AG04449 (cell line): ENCODE measurements at regions of chr17 and their contacts with region 1.

Region 1: GRCh38 chr17:4565209-4566141 is 5.1 kb upstream of the GGT6 start:
- DNase-seq: peak; percentile 36
- H3K4me3 ChIP-seq: no peak overlapping the region
- CTCF ChIP-seq: peak; percentile 84

Region 2: GRCh38 chr17:4420692-4421131 is 144.8 kb before region 1 on chr17:
- CTCF ChIA-PET with region 1: interaction called, 20 read pairs
- POLR2A ChIA-PET with region 1: no interaction called
- DNase-seq: peak; percentile 12
- H3K4me3 ChIP-seq: no peak overlapping the region; the same call in 1 of the 2 replicates
- CTCF ChIP-seq: peak; percentile 80

Region 3: GRCh38 chr17:4480929-4481898 is 84.3 kb before region 1 on chr17:
- CTCF ChIA-PET with region 1: no interaction called
- POLR2A ChIA-PET with region 1: no interaction called
- DNase-seq: no peak
- H3K4me3 ChIP-seq: no peak overlapping the region
- CTCF ChIP-seq: no peak

Region 4: DNA sequence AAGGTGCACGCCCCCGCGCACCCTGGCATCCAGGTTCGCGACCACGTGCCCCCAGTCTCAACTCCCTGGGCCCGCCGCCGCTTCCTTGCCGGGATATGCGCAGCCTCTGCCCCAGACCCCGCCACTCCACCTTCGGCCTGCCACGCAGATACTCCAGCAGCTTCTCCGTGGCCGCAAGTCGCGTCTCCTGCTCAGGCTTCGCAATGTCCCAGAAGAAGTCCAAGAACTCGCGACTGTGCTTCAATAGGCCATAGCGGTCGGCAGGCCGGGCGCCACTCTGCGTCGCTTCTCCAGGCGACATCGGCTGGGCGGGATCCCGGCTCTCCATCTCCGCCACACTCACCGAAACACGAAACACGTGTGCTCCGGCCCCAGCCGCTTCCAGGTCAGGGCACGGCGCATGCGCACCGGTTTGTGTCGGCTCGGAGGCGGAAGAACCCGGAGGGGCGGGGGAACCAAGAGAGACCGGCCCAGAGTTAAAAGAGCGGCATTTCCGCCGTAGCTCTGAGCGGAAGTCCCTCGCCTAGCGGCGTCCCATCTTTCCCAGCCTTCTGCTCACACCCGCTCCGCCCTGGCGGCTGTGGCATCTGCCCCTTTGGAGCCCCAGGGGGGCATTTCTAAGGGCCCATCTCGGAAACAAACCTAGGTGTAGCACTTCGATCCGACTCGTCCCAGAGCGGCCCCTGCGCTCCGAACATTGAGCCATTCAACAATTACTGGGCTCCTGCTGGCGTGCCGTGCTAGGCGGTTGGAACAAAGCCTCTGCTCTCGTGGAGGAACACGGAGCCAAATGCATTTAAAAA is 10.3 kb before region 1 on chr17 and contains the start of gene MYBBP1A:
- CTCF ChIA-PET with region 1: interaction called, 137 read pairs
- POLR2A ChIA-PET with region 1: no interaction called
- DNase-seq: peak; percentile 42
- H3K4me3 ChIP-seq: peak within 1 kb of the TSS; percentile 99
- CTCF ChIP-seq: peak; percentile 12

Region 5: DNA sequence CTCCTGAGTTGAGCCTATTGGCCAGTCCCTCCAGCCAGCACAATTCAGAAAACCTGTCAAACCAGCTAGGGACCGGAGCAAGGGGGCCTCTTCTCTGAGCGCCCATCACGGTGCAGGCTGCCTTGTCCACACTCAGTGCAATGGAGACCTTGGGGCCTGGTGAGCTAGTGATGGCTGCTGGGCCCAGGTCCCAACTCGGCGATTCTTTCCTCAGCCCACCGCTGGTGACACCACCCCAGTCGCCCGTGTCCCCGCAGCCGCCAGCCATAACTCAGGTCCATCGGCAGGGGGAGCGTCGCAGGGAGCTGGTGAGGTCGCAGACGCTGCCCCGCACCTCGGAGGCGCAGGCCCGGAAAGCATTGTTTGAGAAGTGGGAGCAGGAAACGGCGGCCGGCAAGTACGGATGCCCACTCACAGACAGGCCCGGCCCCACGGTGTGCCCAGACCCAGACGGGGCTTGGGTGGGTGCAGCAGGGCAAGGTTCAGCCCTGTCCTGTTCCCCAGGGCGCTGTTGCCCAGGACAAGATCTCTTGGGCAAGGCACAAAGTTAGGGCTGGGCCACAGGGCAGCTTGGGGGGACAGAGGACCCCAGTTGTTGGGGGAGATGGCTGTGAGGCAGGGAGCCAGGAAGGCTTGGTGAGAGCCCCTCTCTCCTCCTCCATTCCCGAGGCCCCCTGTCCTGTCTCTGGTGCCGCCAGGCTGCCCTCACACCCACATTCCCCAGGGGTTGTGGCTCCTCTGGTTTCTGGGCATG is 29.6 kb after region 1 on chr17:
- CTCF ChIA-PET with region 1: interaction called, 20 read pairs
- POLR2A ChIA-PET with region 1: no interaction called
- DNase-seq: no peak
- H3K4me3 ChIP-seq: no peak overlapping the region
- CTCF ChIP-seq: peak; percentile 39

Region 6: GRCh38 chr17:4616476-4616875 is 51.0 kb after region 1 on chr17:
- CTCF ChIA-PET with region 1: interaction called, 268 read pairs
- POLR2A ChIA-PET with region 1: no interaction called
- DNase-seq: no peak
- H3K4me3 ChIP-seq: no peak overlapping the region
- CTCF ChIP-seq: no peak

Region 7: GRCh38 chr17:4635823-4636375 is 70.4 kb after region 1 on chr17:
- CTCF ChIA-PET with region 1: interaction called, 69 read pairs
- POLR2A ChIA-PET with region 1: no interaction called
- DNase-seq: no peak
- H3K4me3 ChIP-seq: no peak overlapping the region
- CTCF ChIP-seq: no peak

Region 8: GRCh38 chr17:4891411-4892342 is 326.2 kb after region 1 on chr17:
- CTCF ChIA-PET with region 1: interaction called, 11 read pairs
- POLR2A ChIA-PET with region 1: no interaction called
- DNase-seq: no peak
- H3K4me3 ChIP-seq: no peak overlapping the region
- CTCF ChIP-seq: no peak

Region 9: DNA sequence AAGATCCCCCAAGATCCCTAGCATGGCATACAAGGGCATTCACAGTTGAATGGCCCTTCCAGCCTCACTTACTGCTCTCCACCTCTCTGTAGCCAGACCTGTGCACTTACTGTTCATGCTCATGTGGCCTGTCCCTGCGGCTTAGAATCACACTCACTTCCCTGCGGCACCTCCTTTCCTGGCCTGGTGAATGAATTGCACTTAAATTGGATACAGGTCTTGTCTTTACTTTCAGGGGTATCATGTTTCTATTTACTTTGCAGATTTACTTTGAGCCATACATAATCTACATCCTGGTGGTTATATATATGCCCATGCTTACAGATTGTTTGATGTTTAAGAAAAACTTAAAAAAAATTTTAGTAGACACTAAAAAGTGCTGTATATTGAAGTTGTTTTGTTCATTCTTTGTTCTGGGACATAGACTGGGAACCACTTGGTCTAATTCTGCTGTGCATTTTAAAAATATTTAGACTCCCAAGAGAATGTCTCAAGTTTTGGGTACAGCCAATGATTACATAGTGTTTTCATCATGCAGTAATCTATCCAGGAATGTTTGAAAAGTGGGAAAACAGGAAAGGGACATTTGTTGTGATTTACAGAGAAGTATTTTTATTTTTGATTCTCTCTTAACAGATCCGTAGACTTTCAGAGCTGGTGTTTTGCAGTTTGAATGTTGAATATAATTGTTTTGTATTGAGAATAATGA is 790.1 kb after region 1 on chr17:
- CTCF ChIA-PET with region 1: no interaction called
- POLR2A ChIA-PET with region 1: no interaction called
- DNase-seq: no peak
- H3K4me3 ChIP-seq: no peak overlapping the region
- CTCF ChIP-seq: no peak